ENCODE measurements at regions of chr7 and their contacts with region 1.

Region 1: DNA sequence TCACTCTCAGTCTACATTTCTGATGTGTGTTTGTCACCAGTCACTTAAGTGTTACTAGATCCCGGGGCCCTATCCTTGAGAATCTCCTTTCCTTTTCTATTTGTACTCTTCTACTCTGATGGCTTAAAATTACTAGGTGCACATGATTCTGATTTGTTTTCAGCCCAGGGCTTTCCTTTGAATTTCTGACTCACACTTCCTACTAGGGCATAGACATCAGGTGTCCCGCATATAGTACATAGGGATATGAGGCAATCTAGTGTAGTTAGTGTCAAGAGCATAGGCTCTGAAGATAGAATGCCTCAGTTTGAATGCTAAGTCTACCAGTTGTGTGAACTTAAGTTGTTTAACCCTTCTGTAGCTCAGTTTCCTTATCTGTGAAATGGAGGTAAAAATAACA is 49.4 kb upstream of the LRRN3 start:
- DNase-seq: no peak
- H3K4me3 Mint-ChIP-seq: no peak overlapping the region
- H3K27ac Mint-ChIP-seq: peak overlapping the region; percentile 14
- H3K4me1 Mint-ChIP-seq: peaks cover 26% of the 10 kb centered on the region
- H3K27me3 Mint-ChIP-seq: no peaks in the 10 kb centered on the region

Region 2: DNA sequence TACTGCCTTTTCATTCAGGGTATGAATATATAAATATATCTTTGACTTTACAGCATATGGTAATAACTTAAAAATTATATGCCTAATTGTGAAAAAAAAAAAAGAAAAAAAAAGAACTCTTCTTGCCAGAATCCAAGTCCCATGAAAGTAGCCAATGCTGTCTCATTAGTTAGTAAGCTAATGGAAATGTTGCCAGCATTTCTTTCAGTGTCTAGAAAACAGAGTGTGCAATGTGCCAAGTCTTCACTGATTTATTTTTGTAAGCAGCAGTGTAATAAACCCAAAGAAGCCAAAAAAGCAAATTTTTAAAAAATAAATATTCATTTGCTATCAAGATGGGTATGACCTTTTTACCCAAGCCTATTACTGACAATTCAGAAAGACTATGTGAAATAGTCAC is 18.3 kb after region 1 on chr7:
- intact Hi-C with region 1: loop called (anchors 2 kb)
- DNase-seq: no peak
- H3K4me3 Mint-ChIP-seq: no peak overlapping the region
- H3K27ac Mint-ChIP-seq: no peak overlapping the region
- H3K4me1 Mint-ChIP-seq: peaks cover 10% of the 10 kb centered on the region
- H3K27me3 Mint-ChIP-seq: no peaks in the 10 kb centered on the region